SK-MEL-5 (cell line): ENCODE measurements at regions of chr17 and their contacts with region 1.

Region 1: GRCh38 chr17:75940724-75941441 is at the start of gene FBF1:
- DNase-seq: peak; percentile 99
- total RNA-seq, gene FBF1: 17.6 and 24.8 TPM in 2 replicates

Region 2: DNA sequence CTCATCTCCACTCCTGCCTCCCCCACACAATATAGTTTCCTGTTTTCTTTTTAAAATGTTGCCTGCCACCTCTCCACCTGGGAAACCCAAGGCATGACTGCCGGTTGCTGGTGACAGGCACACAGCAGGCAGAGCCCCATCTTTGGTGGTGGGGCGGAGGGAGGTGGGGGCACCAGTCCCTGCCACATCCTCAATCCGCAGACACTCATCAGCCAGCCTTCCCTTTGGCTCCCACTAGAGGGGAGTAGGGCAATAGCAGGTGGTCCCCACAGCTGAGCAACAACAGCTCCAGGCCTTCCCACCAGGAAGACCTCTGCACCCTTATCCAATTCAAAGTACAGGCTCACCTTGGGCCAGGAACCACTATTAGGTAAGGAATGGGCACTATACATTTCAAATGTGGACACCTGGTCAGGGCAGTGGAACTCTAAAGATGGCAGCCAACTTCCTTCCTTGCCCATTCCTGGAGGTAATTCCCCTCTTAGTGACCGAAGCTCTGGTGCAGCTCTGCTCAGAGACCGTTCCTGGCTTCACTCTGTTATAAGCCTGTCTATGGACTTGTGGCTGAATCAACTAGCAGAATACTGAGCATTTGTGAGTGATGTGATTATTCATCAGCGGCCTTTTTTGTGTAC is 287.9 kb before region 1 on chr17:
- in situ Hi-C with region 1: no loop called
- DNase-seq: peak; percentile 76

Region 3: GRCh38 chr17:76072148-76072858 is 131.4 kb after region 1 on chr17 and contains the start of gene SRP68:
- in situ Hi-C with region 1: loop called (anchors 25 kb)
- DNase-seq: peak; percentile 97
- total RNA-seq, gene SRP68: 58.2 and 68.6 TPM in 2 replicates

Region 4: GRCh38 chr17:76088036-76088867 is 147.4 kb after region 1 on chr17:
- in situ Hi-C with region 1: no loop called
- DNase-seq: peak; percentile 47